OCI-LY7 (cell line): ENCODE measurements at regions of chr1 and their contacts with region 1.

Region 1: DNA sequence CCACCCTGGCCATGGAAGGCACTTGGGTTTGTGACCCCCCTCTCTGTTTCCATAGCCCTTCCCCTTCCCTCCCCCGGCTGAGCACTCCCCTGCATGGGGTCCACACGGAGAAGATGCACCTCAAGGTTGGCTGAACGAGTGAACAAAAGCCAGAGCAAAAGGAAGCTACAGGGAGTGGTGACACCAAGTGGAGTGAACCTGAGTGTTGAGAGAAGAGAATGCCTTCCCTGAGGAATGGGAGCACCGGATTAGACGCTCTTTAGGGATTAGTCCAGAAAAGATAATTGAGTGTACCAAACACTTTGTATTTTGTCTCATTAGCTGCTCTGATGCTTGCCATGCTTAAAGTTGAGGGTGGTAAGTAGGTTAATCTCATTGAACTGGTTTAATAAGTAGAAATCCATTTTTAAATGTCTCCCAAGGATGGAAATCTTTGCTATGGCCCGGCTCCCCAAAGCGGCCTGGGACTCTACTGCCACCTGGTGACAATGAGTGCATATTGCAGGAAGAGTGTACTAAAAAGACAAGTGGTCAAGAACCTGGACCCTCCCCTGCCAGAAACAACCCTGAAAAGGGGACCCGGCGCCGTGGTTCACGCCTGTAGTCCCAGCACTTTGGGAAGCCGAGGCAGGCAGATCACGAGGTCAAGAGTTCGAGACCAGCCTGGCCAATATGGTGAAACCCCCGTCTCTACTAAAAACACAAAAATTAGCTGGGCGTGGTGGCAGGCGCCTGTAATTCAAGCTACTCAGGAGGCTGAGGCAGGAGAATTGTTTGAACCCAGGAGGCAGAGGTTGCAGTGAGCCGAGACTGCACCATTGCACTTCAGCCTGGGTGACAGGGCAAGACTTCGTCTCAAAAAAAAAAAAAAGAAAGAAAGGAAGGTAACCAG is 150.6 kb upstream of the ZC3H12A start:
- DNase-seq: peak; percentile 54
- H3K4me3 ChIP-seq: no peak overlapping the region
- H3K27ac ChIP-seq: no peak overlapping the region
- H3K4me1 ChIP-seq: no peaks in the 10 kb centered on the region
- CTCF ChIP-seq: peak; percentile 91

Region 2: DNA sequence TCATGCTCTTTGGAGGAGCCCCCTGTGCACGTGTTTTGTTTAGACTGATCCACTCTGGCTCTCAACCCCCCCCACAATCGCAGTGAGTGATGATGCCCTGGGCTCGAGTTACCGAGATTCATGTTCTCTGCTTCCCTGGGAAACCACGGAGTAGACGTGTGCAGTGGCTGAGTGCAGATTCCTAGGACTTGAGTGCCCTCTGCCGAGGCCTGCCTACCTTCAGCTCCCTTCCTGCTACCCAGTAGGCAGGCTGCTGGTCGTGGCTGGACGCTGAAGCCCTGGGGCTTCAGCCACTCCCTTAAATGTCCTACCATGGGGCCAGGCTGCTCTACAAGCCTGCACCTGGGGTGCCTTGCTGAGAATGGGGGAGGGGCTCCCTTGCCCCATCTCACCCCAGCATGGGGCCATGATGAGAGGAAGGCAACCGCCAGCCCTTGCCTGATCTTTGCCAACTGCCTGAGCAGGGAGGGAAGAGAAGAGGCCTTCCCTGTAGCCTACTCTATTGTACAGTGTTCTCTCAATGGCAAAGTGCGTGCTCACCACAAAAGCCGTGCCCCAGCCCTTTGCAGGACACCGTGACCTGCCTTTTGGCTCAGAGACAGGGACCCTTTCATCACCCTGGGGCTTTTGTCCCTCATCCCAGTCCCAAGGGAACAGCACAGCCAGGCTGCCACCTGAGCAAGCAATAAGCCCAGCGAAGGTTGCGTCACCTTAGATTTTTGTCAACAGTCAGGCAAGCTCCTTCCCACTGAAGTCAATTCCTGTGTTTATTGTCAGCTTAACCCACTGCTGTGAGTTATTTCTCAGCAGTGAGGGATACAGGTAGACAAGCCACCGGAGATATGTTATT is 285.3 kb before region 1 on chr1:
- CTCF ChIA-PET with region 1: no interaction called
- POLR2A ChIA-PET with region 1: no interaction called
- intact Hi-C with region 1: loop called (anchors 5 kb)
- DNase-seq: peak; percentile 75
- H3K4me3 ChIP-seq: no peak overlapping the region
- H3K27ac ChIP-seq: no peak overlapping the region
- H3K4me1 ChIP-seq: peaks cover 55% of the 10 kb centered on the region
- CTCF ChIP-seq: peak; percentile 75

Region 3: GRCh38 chr1:37096466-37096865 is 227.3 kb before region 1 on chr1:
- CTCF ChIA-PET with region 1: interaction called, 3 read pairs
- POLR2A ChIA-PET with region 1: no interaction called
- intact Hi-C with region 1: loop called (anchors 1 kb)
- DNase-seq: peak; percentile 50
- H3K4me3 ChIP-seq: no peak overlapping the region
- H3K27ac ChIP-seq: no peak overlapping the region
- H3K4me1 ChIP-seq: peaks cover 22% of the 10 kb centered on the region
- CTCF ChIP-seq: peak; percentile 77

Region 4: GRCh38 chr1:37177247-37177864 is 146.4 kb before region 1 on chr1:
- CTCF ChIA-PET with region 1: no interaction called
- POLR2A ChIA-PET with region 1: interaction called, 3 read pairs
- intact Hi-C with region 1: loop called (anchors 2 kb)
- DNase-seq: peak; percentile 50
- H3K4me3 ChIP-seq: no peak overlapping the region
- H3K27ac ChIP-seq: no peak overlapping the region
- H3K4me1 ChIP-seq: no peaks in the 10 kb centered on the region
- CTCF ChIP-seq: peak; percentile 77

Region 5: DNA sequence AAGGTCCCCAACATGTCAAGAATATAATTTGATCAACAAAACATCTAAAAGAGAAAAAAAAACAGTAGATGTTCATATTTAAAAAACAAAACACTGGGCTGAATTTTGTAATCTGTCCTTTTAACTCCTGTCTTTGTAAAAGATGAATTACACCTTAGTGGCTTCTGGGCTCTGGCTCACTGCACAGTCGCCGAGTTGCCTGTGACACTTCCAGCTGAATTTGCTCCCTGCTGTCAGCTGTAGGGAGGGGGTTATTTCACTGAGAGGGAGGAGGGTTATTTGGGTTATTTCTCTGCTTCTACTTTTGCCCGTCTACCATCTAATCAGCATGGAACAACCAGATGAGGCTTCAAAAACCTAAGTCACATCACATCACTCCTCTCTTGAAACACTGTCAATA is 42.4 kb before region 1 on chr1:
- CTCF ChIA-PET with region 1: no interaction called
- POLR2A ChIA-PET with region 1: no interaction called
- intact Hi-C with region 1: loop called (anchors 1 kb)
- DNase-seq: no peak
- H3K4me3 ChIP-seq: no peak overlapping the region
- H3K27ac ChIP-seq: no peak overlapping the region
- H3K4me1 ChIP-seq: no peaks in the 10 kb centered on the region
- CTCF ChIP-seq: no peak

Region 6: DNA sequence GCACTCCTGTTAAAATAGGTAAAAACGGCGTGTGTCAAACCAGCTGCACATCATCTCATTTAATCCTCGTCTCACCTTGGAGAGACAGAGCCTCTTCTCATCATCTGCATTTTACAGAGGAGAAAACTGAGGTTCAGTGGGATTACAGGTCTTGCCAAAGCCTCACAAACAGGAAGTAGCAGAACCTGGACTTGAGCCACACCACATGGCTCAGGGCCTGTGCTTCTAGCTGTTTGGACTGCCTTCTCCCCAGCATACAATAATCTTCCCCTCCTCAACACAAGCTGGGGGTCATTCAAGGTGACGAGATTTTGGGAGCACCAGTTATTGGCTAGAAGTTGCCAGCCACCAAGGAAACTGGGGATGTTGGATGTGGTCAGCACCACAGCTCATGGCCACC is 17.3 kb before region 1 on chr1:
- CTCF ChIA-PET with region 1: no interaction called
- POLR2A ChIA-PET with region 1: no interaction called
- intact Hi-C with region 1: no loop called
- DNase-seq: no peak
- H3K4me3 ChIP-seq: no peak overlapping the region
- H3K27ac ChIP-seq: no peak overlapping the region
- H3K4me1 ChIP-seq: no peaks in the 10 kb centered on the region
- CTCF ChIP-seq: no peak